Calu3 (cell line): ENCODE measurements at regions of chr10 and their contacts with region 1.

Region 1: DNA sequence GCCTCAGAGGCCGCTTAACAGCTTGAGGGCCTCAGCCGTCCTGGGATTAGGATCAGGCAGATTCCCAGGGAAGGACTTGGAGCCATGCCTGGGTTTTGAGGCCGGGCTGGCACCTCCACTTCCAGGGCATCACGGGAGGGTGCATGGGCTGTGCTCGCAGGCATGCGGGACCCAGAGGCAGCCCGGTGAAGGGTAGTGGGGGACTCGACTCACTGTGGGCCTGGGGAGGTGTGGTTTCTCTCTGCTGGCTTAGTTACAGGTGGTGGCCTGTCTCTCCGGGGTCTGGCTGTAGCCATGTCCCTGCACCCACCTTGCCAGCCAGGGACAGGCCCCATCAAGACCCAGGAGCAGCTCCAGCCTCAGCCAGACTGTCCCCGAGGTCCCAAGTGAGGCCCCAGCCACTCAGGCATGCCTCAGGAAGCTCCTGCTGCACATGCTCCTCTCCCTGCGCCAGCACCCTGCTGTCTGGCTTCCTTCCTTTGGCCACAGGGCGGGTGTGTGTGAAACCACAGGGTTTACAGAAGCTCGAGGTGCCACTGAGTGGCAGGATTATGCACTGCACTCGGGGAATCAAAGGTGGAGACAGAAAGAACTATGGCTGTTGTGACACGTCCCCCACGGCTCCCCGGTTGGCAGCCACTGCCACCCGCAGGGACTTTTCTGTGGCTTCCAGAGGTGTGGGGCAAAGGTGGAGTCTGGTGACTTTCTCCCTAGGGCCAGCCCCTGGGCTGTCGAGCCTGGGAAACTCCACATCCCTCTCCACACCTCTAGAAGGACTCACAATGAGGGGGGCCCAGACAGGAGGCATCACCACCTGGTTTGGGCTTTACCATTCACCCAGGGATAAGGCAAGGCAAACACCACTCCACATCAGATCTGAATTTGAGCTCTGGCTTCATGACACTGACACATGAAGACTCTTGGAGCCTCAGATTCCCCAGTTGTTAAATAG is 19.7 kb downstream of the GOLGA7B start:
- DNase-seq: peak; percentile 83
- H3K4me3 Mint-ChIP-seq: no peak overlapping the region
- H3K27ac Mint-ChIP-seq: no peak overlapping the region
- H3K4me1 Mint-ChIP-seq: no peaks in the 10 kb centered on the region
- H3K27me3 Mint-ChIP-seq: no peaks in the 10 kb centered on the region
- CTCF ChIP-seq: peak; percentile 62

Region 2: DNA sequence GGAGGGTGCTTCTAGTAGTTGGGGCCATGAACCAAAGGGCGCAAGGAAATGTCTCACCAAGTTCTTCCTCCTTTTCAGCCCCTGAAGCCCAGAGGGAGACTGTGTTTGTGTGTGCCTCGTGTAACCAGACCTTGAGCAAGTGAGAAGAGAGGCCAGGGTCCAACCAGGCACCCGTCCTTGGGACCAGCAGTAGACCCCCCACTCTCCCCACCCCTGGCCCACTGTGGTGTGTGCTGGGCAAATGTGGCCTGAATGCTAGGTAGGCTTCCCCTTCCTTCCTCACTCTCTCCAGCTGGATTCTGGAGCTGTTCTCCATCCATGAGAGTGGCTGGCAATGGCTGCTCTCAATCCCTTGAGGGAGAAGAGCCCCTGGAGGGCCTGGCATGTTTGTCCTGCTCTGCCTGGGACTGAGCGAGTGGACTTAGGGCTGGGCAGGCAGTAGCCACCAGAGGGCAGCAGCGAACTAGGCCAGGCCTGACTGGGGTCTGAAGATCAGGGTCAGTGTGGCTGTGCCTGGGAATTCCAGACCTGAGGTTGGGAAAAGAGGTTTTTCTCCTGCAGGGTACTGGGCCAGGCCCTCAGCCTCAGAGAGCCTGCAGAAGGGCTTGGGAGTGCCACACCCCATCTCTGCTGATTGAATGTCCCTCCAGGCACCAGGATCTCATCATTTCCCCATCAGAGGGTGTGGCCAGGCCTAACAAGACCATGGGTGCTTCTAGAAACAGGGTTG is 110.0 kb before region 1 on chr10:
- CTCF ChIA-PET with region 1: no interaction called
- intact Hi-C with region 1: loop called (anchors 1 kb)
- DNase-seq: peak; percentile 71
- H3K4me3 Mint-ChIP-seq: no peak overlapping the region
- H3K27ac Mint-ChIP-seq: no peak overlapping the region
- H3K4me1 Mint-ChIP-seq: no peaks in the 10 kb centered on the region
- H3K27me3 Mint-ChIP-seq: no peaks in the 10 kb centered on the region
- CTCF ChIP-seq: peak; percentile 71

Region 3: GRCh38 chr10:97792141-97792721 is 77.1 kb before region 1 on chr10:
- CTCF ChIA-PET with region 1: interaction called, 10 read pairs
- intact Hi-C with region 1: loop called (anchors 1 kb)
- DNase-seq: peak; percentile 75
- H3K4me3 Mint-ChIP-seq: no peak overlapping the region
- H3K27ac Mint-ChIP-seq: no peak overlapping the region
- H3K4me1 Mint-ChIP-seq: no peaks in the 10 kb centered on the region
- H3K27me3 Mint-ChIP-seq: peaks cover 15% of the 10 kb centered on the region
- CTCF ChIP-seq: peak; percentile 74

Region 4: GRCh38 chr10:99232360-99232999 is 1363.1 kb after region 1 on chr10:
- CTCF ChIA-PET with region 1: no interaction called
- intact Hi-C with region 1: no loop called
- DNase-seq: no peak
- H3K4me3 Mint-ChIP-seq: no peak overlapping the region
- H3K27ac Mint-ChIP-seq: no peak overlapping the region
- H3K4me1 Mint-ChIP-seq: no peaks in the 10 kb centered on the region
- H3K27me3 Mint-ChIP-seq: peaks cover 89% of the 10 kb centered on the region
- CTCF ChIP-seq: no peak